Endothelial cell of umbilical vein (primary cell): ENCODE measurements at regions of chr16 and their contacts with region 1.

Region 1: DNA sequence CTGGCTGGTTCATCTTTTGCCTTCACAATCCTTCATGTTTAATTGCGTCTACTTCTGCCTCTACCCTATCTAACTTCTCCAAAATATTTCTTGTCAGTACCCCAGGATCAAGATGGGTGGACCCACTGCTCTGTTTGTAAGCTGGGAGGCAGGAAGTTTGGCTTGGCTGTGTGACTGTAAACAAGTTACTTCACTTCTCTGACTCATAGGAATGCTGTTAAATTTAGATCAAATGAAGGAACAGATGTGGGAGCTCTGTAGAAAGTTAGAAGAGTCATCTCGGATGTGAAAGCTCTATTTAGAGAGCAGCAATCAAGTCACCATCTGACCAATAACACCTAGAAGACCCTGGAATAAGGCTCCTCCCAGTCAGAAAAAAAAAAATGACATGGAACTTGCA is 55.2 kb upstream of the MRTFB start:
- DNase-seq: peak; percentile 73
- H3K4me3 ChIP-seq: no peak overlapping the region
- H3K27ac ChIP-seq: no peak overlapping the region
- H3K4me1 ChIP-seq: peaks cover 19% of the 10 kb centered on the region
- H3K27me3 ChIP-seq: peaks cover 0 to 2% of the 10 kb centered on the region in 2 experiments
- CTCF ChIP-seq: no peak
- POLR2A ChIP-seq: no peak

Region 2: DNA sequence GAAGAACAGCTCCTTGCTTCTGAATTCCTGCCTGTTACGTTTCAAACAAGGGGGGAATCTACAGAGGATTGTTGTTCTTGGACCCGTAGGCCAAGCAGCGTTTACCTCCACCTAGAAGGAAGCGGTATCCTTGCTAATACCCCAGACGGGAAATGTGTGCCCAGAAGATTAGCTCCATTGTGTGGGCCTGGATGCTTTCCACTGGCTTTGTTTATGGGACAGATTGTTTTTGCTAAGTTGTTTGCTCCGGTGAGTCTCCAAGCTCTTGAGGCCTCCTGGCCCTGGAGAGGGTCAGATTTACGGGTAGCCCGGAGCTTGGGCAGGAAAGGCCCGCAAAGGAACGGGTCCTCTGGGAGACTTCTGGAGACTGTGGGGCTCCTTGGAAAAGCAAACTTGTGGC is 26.8 kb after region 1 on chr16:
- CTCF ChIA-PET with region 1: interaction called, 4 read pairs
- POLR2A ChIA-PET with region 1: no interaction called
- dilution Hi-C with region 1: no loop called
- intact Hi-C with region 1: loop called (anchors 2 kb)
- DNase-seq: peak; percentile 99
- H3K4me3 ChIP-seq: no peak overlapping the region
- H3K27ac ChIP-seq: peak overlapping the region; percentile 56
- H3K4me1 ChIP-seq: peaks cover 21% of the 10 kb centered on the region
- H3K27me3 ChIP-seq: no peaks in the 10 kb centered on the region
- CTCF ChIP-seq: no peak
- POLR2A ChIP-seq: peak; percentile 64

Region 3: DNA sequence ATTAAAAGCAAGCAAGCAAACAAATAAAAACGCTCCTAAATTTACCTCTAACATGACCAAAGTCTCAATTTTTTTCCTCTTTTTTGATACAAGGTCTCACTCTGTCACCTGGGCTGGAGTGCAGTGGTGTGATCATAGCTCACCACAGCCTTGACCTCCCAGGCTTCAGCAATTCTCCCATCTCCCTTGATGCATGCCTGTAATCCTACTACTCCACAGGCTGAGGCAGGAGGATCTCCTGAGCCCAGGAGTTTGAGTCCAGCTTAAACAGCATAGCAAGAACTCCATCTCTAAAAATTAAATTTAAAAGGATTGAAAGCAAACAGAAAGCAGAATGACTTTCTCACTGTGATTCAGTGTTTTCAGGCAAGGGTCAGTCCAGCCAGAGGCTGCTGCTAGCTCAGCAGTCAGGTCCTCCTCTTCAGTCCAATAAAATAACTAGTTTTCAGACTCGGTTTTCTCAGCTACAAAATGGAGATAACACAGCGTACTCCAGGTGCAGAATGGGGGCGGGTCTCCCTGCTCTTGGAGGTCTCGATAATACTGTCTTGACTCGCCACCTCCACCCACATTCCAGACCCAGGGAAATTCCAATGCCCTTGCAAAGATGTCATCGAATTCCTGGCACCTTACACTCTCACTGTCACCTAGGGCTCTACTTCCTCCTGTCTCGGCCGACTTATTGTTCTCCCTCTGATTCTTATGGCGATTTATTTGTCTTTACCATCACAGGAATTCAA is 34.5 kb after region 1 on chr16:
- CTCF ChIA-PET with region 1: interaction called, 3 read pairs
- POLR2A ChIA-PET with region 1: no interaction called
- dilution Hi-C with region 1: no loop called
- intact Hi-C with region 1: loop called (anchors 2 kb)
- DNase-seq: peak; percentile 62
- H3K4me3 ChIP-seq: peak overlapping the region in 1 of 3 experiments; percentile 28
- H3K27ac ChIP-seq: peak overlapping the region; percentile 84
- H3K4me1 ChIP-seq: peaks cover 17% of the 10 kb centered on the region
- H3K27me3 ChIP-seq: no peaks in the 10 kb centered on the region
- CTCF ChIP-seq: no peak
- POLR2A ChIP-seq: no peak

Region 4: DNA sequence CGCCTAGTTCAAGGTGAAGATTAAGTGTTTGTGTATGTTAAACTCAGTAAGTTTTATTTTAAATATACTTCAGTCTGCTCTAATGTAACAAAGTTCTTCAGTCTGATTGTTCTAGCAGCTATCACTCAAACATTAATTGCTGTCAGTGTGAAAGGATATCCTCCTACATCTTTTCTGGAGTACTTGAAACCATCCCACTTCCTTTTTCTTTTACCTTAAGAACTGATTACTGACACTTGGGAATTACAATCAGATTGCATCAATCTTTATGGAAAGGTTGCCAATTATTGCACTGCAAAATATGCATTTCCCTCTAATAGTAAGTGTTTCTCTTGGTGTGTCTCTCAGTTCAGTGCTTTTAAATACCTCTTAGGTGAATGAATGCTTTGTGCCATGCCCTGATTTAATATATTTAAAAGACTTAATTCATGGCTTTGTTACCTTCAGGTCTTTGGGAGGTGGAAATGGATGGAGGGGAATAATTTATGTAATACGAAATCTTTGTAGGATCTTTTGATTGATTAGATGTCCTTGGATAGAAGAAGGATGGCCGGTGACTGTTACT is 71.7 kb after region 1 on chr16:
- CTCF ChIA-PET with region 1: no interaction called
- POLR2A ChIA-PET with region 1: no interaction called
- dilution Hi-C with region 1: no loop called
- intact Hi-C with region 1: no loop called
- DNase-seq: no peak
- H3K4me3 ChIP-seq: no peak overlapping the region
- H3K27ac ChIP-seq: no peak overlapping the region
- H3K4me1 ChIP-seq: peaks cover 7% of the 10 kb centered on the region
- H3K27me3 ChIP-seq: no peaks in the 10 kb centered on the region
- CTCF ChIP-seq: no peak
- POLR2A ChIP-seq: no peak